ENCODE measurements at regions of chr16 and their contacts with region 1.

Region 1: DNA sequence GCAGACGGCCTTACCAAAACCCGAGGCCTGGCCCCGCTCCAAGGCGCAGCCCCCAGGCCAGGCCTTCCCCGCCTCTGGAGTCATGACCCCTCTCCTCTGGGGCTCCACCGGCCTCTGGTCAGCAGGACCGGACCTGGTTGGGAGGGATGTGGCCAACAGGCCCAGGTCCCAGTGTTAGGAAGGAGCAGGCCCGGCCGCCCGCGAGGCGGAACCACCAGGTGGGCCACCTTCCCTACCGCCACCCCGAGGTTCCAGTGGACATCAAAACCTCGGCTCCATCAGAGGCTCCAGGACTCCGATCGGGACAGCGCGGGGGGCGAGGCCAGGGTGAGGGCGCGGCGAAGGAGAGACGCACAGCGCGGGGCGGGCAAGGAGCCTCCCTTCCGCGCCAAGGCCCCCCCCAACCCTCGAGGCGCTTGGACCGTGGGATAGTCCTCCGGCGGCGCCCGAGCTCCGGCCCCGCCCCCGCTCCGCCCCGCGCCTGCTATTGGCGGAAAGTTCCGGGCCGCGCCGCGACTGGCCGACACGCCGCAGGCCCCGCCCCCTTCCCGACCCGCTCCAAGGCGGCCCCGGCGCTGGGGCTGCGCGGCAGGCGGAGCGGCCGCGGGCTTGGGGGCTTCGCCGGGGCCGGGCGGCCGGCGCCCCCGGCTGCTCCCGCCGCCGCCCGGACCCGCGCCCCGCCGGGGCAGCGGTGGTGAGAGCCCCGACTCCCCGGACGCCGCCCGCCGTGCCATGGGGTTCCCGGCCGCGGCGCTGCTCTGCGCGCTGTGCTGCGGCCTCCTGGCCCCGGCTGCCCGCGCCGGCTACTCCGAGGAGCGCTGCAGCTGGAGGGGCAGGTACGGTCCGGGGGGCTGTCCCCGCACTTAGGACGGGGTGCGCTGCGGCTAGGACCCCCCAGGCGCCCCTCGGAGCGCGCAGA is at the start of gene METRN:
- DNase-seq: peak; percentile 87 to 98 (median 94)
- ATAC-seq: peak; percentile 78 to 91 (median 86)
- H3K4me3 ChIP-seq: peak within 1 kb of the TSS; percentile 56 to 89 (median 68)
- H3K27ac ChIP-seq: peak within 1 kb of the TSS; percentile 36 to 60 (median 50)
- H3K4me1 ChIP-seq: peaks cover 3 to 17% (median 14%) of the 10 kb centered on the region in 3 donors
- H3K27me3 ChIP-seq: peaks cover 0 to 10% (median 0%) of the 10 kb centered on the region in 4 donors
- CTCF ChIP-seq: no peak
- total RNA-seq, gene METRN: 27.6 to 44.9 (median 37.7) TPM

Region 2: GRCh38 chr16:788394-789126 is 73.7 kb after region 1 on chr16 and contains the start of gene CHTF18:
- intact Hi-C with region 1: loop called in 1 of 3 experiments (anchors 2 kb)
- DNase-seq: peak; percentile 87 to 96 (median 96)
- ATAC-seq: peak; percentile 93 to 96 (median 94)
- H3K4me3 ChIP-seq: peak within 1 kb of the TSS; percentile 89 to 96 (median 93)
- H3K27ac ChIP-seq: peak within 1 kb of the TSS in 1 of 4 donors; percentile 39
- H3K4me1 ChIP-seq: peaks cover 0 to 13% (median 6%) of the 10 kb centered on the region in 3 donors
- H3K27me3 ChIP-seq: no peaks in the 10 kb centered on the region
- CTCF ChIP-seq: no peak
- total RNA-seq, gene CHTF18: 5.4 to 11.0 (median 6.5) TPM

Region 3: DNA sequence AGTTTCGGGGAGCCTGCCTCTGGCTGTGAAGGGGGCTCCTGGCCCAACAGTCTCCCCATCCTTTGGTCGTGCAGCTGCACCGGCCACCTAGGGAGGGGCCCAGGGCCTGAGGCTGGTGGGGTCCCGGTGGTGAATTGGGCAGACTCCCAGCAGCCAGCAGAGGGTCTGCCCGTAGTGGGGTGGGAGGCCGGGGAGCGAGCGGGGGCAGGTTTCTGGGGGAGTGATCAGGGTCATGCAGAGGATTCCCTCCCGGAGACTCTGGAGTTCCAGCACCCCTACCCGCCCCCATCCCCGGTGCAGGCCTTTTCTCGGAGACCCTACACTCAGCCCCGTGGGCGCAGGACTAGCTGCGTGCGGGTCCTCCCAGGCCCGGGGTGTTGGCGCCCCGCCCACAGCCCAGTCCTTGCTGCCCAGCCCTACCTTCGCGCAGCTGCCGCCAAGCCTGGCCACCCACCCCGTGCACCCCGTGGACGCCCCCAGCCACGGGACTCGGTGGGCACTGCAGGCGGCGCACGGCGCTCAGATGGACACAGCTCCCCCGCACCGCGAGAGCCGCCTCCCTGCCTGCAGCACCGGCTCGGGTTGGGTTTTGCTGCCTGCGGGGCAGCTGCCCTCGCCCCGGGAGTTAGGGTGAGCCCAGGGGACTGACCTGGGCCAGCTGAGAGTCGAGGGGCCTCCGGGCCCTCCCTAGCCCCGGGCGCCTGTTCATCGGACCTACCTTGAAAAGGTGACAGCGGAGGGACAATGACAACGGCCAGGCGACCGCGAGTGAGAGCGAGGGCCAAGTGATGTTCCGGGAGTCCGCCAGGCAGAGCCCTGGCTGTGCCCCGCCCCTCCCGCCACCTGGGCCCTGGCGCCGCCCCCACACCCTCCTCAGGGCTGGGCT is 85.4 kb after region 1 on chr16 and contains the start of gene GNG13:
- intact Hi-C with region 1: no loop called
- DNase-seq: peak in 1 of 6 donors; percentile 73
- ATAC-seq: peak in 1 of 4 donors; percentile 6
- H3K4me3 ChIP-seq: no peak within 1 kb of the TSS
- H3K27ac ChIP-seq: no peak within 1 kb of the TSS
- H3K4me1 ChIP-seq: no peaks in the 10 kb centered on the region
- H3K27me3 ChIP-seq: peaks cover 0 to 13% (median 0%) of the 10 kb centered on the region in 4 donors
- CTCF ChIP-seq: no peak
- total RNA-seq, gene GNG13: not detected

Region 4: DNA sequence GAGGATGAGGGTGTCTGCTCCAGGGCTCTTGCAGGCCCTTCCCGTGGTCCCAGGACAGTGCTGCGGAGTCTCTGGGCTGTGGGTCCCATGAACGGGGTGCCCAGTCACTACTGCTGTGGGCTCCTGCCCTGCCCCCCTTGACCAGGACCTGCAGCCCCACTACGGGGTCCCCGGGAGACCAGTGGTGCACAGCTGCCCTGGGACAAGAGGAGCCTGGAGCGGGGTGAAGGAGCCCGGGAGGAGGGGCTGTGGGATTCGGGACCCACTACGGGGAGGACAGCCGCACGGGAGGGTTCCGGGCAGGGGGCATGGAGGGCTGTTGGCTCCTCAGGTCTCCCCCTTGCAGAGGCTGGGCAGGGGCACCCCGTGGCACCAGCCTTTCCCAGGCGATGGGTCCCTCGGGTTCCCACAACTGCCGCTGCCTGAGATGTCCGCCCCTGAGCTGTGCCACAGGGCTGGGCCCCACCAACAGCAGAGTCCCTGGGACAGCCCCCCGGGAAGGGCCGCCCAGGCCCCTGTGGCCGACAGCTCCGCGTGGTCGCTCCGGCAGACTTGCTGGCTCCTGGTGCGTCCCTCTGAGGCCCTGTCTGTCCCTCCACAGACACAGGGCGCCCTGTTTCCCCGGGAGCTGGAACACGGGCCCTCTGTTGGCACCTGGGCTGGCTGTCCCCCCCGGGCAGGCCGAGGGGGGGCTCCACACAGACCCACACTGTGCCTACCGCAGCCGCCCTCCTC is 137.8 kb after region 1 on chr16:
- intact Hi-C with region 1: no loop called
- DNase-seq: peak in 2 of 6 donors; percentile 28 to 71
- ATAC-seq: peak in 1 of 4 donors; percentile 9
- H3K4me3 ChIP-seq: no peak overlapping the region
- H3K27ac ChIP-seq: no peak overlapping the region
- H3K4me1 ChIP-seq: no peaks in the 10 kb centered on the region
- H3K27me3 ChIP-seq: no peaks in the 10 kb centered on the region
- CTCF ChIP-seq: no peak

Region 5: GRCh38 chr16:2090777-2091546 is 1376.1 kb after region 1 on chr16:
- intact Hi-C with region 1: no loop called
- DNase-seq: peak; percentile 88 to 98 (median 96)
- ATAC-seq: peak; percentile 81 to 85 (median 82)
- H3K4me3 ChIP-seq: peak overlapping the region in 3 of 4 donors; percentile 23 to 45 (median 26)
- H3K27ac ChIP-seq: peak overlapping the region; percentile 59 to 85 (median 71)
- H3K4me1 ChIP-seq: peaks cover 0 to 12% (median 0%) of the 10 kb centered on the region in 3 donors
- H3K27me3 ChIP-seq: no peaks in the 10 kb centered on the region
- CTCF ChIP-seq: peak in 3 of 4 donors; percentile 14 to 22 (median 16)